CD8-positive, alpha-beta T cell (primary cell): ENCODE measurements at regions of chr5 and their contacts with region 1.

Region 1: GRCh38 chr5:74766849-74767578 is at the starts of genes GFM2 and NSA2:
- DNase-seq: peak; percentile 83 to 95 (median 93)
- ATAC-seq: peak; percentile 85
- H3K4me3 ChIP-seq: peak within 1 kb of the TSS; percentile 94 to 96
- H3K4me3 Mint-ChIP-seq: peak within 1 kb of the TSS; percentile 100
- H3K27ac ChIP-seq: peak within 1 kb of the TSS; percentile 70 to 84
- H3K27ac Mint-ChIP-seq: peak within 1 kb of the TSS; percentile 97
- H3K4me1 ChIP-seq: peaks cover 25% of the 10 kb centered on the region
- H3K4me1 Mint-ChIP-seq: peaks cover 39% of the 10 kb centered on the region
- H3K27me3 ChIP-seq: no peaks in the 10 kb centered on the region
- H3K27me3 Mint-ChIP-seq: no peaks in the 10 kb centered on the region
- CTCF ChIP-seq: no peak
- total RNA-seq, gene GFM2: 11.0 to 15.0 TPM
- total RNA-seq, gene NSA2: 142 TPM

Region 2: DNA sequence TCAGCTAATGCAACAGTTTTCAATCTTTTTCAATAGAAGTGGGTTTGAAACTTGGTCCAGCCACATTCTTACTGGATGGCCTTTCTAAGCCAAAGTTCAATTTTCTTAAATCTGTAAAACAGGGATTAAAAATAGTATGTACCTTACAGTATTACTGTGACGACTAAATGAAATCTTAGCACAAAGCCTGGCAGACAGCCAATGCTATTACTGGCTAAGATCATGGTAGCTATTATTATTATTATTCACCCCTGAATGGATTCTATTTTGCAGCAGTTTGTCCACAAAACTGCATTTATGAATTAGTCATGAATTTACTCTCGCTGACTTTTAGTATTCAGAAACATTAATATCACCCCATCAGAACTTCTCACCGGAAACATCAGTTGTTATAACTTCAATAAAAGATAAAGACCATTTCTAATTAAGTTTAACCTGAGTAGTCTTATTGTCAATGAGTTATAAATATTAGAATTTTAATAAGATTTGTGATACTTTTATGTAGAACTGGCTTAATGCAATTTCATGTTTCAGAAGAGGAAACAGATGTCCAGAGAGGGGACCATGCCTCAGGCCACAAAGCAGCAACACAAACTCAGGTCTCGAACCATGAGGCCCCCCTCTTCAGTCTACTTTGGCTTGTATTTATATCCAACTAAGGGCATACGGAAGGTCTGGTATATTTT is 672.8 kb before region 1 on chr5:
- CTCF ChIA-PET with region 1: no interaction called
- POLR2A ChIA-PET with region 1: no interaction called
- intact Hi-C with region 1: no loop called
- DNase-seq: no peak
- ATAC-seq: no peak
- H3K4me3 ChIP-seq: no peak overlapping the region
- H3K4me3 Mint-ChIP-seq: no peak overlapping the region
- H3K27ac ChIP-seq: no peak overlapping the region
- H3K27ac Mint-ChIP-seq: no peak overlapping the region
- H3K4me1 ChIP-seq: no peaks in the 10 kb centered on the region
- H3K4me1 Mint-ChIP-seq: no peaks in the 10 kb centered on the region
- H3K27me3 ChIP-seq: no peaks in the 10 kb centered on the region
- H3K27me3 Mint-ChIP-seq: peaks cover 8% of the 10 kb centered on the region
- CTCF ChIP-seq: no peak

Region 3: GRCh38 chr5:74684900-74685851 is 81.8 kb before region 1 on chr5 and contains the start of gene HEXB:
- CTCF ChIA-PET with region 1: interaction called, 3 read pairs
- POLR2A ChIA-PET with region 1: no interaction called
- intact Hi-C with region 1: loop called (anchors 2 to 5 kb)
- DNase-seq: peak; percentile 49 to 90 (median 83)
- ATAC-seq: peak; percentile 91
- H3K4me3 ChIP-seq: peak within 1 kb of the TSS; percentile 78 to 80
- H3K4me3 Mint-ChIP-seq: peak within 1 kb of the TSS; percentile 85
- H3K27ac ChIP-seq: peak within 1 kb of the TSS; percentile 55 to 63
- H3K27ac Mint-ChIP-seq: peak within 1 kb of the TSS; percentile 74
- H3K4me1 ChIP-seq: peaks cover 9% of the 10 kb centered on the region
- H3K4me1 Mint-ChIP-seq: peaks cover 24% of the 10 kb centered on the region
- H3K27me3 ChIP-seq: no peaks in the 10 kb centered on the region
- H3K27me3 Mint-ChIP-seq: peaks cover 1% of the 10 kb centered on the region
- CTCF ChIP-seq: no peak
- total RNA-seq, gene HEXB: 29.2 to 37.0 TPM

Region 4: DNA sequence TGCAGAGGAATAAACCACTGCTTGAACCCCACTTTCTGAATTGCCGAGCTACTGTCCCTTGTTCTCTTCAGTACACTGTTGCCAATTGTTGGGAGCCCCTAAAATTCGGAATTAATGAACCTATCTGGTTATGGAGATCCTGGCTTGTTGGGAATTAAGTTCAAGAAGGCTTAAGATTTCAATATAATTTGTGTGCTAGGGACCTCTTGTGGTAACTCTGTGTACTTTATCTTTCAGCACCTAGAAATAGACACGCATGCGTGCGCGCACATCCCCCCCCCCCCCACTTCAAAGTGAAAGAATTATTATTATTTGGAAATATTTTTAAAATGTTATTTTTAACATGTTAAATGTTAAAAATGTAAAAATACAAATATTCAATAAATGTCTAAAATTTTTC is 152.5 kb after region 1 on chr5:
- CTCF ChIA-PET with region 1: interaction called, 23 read pairs
- POLR2A ChIA-PET with region 1: no interaction called
- intact Hi-C with region 1: loop called (anchors 1 kb)
- DNase-seq: peak in 3 of 9 experiments; percentile 18 to 73 (median 62)
- ATAC-seq: peak; percentile 78
- H3K4me3 ChIP-seq: no peak overlapping the region
- H3K4me3 Mint-ChIP-seq: no peak overlapping the region
- H3K27ac ChIP-seq: no peak overlapping the region
- H3K27ac Mint-ChIP-seq: no peak overlapping the region
- H3K4me1 ChIP-seq: no peaks in the 10 kb centered on the region
- H3K4me1 Mint-ChIP-seq: no peaks in the 10 kb centered on the region
- H3K27me3 ChIP-seq: no peaks in the 10 kb centered on the region
- H3K27me3 Mint-ChIP-seq: peaks cover 2% of the 10 kb centered on the region
- CTCF ChIP-seq: peak; percentile 79

Region 5: DNA sequence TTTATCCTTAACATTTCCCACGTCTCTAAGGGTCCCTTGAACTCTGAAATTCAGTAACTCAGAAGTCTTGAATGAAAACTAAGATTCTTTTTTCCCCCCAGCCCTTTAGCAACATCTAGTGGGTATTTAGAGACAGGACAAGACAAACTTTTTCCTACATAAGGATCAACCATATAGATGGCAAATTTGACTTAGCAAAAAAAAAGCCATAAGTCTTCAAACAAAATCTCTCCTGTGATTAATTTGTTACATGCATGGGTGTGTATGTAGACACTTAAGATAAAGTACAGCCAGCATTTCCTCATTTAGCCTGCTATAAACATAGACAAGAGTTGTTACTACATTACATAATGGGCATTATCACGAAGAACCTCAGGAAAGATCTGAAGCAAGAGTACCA is 498.7 kb after region 1 on chr5:
- CTCF ChIA-PET with region 1: interaction called, 4 read pairs
- POLR2A ChIA-PET with region 1: interaction called, 3 read pairs
- intact Hi-C with region 1: loop called (anchors 1 to 2 kb)
- DNase-seq: peak in 2 of 9 experiments; percentile 57 to 67
- ATAC-seq: peak; percentile 78
- H3K4me3 ChIP-seq: no peak overlapping the region
- H3K4me3 Mint-ChIP-seq: no peak overlapping the region
- H3K27ac ChIP-seq: no peak overlapping the region
- H3K27ac Mint-ChIP-seq: no peak overlapping the region
- H3K4me1 ChIP-seq: no peaks in the 10 kb centered on the region
- H3K4me1 Mint-ChIP-seq: peaks cover 3% of the 10 kb centered on the region
- H3K27me3 ChIP-seq: no peaks in the 10 kb centered on the region
- H3K27me3 Mint-ChIP-seq: peaks cover 5% of the 10 kb centered on the region
- CTCF ChIP-seq: peak; percentile 68

Region 6: GRCh38 chr5:75511435-75512384 is 744.7 kb after region 1 on chr5 and contains the starts of genes CERT1 and POLK:
- CTCF ChIA-PET with region 1: no interaction called
- POLR2A ChIA-PET with region 1: no interaction called
- intact Hi-C with region 1: loop called (anchors 2 to 5 kb)
- DNase-seq: peak; percentile 78 to 97 (median 89)
- ATAC-seq: peak; percentile 87
- H3K4me3 ChIP-seq: peak within 1 kb of the TSS; percentile 72 to 79
- H3K4me3 Mint-ChIP-seq: peak within 1 kb of the TSS; percentile 96
- H3K27ac ChIP-seq: peak within 1 kb of the TSS; percentile 74 to 78
- H3K27ac Mint-ChIP-seq: peak within 1 kb of the TSS; percentile 97
- H3K4me1 ChIP-seq: peaks cover 29% of the 10 kb centered on the region
- H3K4me1 Mint-ChIP-seq: peaks cover 64% of the 10 kb centered on the region
- H3K27me3 ChIP-seq: no peaks in the 10 kb centered on the region
- H3K27me3 Mint-ChIP-seq: no peaks in the 10 kb centered on the region
- CTCF ChIP-seq: no peak
- total RNA-seq, gene CERT1: 29.2 to 36.4 TPM
- total RNA-seq, gene POLK: 6.9 to 10.0 TPM

Region 7: GRCh38 chr5:76256116-76256889 is 1489.3 kb after region 1 on chr5:
- CTCF ChIA-PET with region 1: no interaction called
- POLR2A ChIA-PET with region 1: interaction called, 3 read pairs
- intact Hi-C with region 1: loop called in 1 of 2 experiments (anchors 10 kb)
- DNase-seq: peak; percentile 15 to 82 (median 57)
- ATAC-seq: peak; percentile 98
- H3K4me3 ChIP-seq: no peak overlapping the region
- H3K4me3 Mint-ChIP-seq: peak overlapping the region; percentile 30
- H3K27ac ChIP-seq: no peak overlapping the region
- H3K27ac Mint-ChIP-seq: no peak overlapping the region
- H3K4me1 ChIP-seq: peaks cover 3% of the 10 kb centered on the region
- H3K4me1 Mint-ChIP-seq: peaks cover 3% of the 10 kb centered on the region
- H3K27me3 ChIP-seq: peaks cover 0 to 3% of the 10 kb centered on the region in 2 experiments
- H3K27me3 Mint-ChIP-seq: peaks cover 9% of the 10 kb centered on the region
- CTCF ChIP-seq: peak; percentile 62